IMR-90 (cell line): ENCODE measurements at regions of chr1 and their contacts with region 1.

Region 1: DNA sequence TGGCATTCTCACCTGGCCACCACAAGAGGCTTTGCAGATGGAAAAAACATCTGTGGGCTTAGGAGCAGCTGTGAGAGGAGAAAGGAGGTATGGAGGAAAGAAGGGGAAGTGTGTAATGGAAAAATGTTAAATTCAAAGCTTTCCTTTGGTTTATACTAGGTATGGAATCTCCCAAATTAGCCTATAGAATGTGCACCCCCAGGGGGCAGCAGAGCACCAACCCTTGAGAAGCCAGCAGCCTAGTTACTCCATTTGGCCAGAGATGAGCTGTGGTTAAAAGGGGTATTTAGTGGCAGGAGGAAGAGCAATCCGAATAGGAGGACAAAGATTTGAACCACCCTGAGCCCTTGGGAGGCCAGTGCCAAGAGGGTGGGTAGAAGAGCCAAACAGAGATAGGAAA is 97.5 kb upstream of the CTTNBP2NL start:
- DNase-seq: peak; percentile 42
- ATAC-seq: peak; percentile 52; the same call in 1 of the 2 replicates
- H3K4me3 ChIP-seq: no peak overlapping the region
- H3K27ac ChIP-seq: no peak overlapping the region
- H3K4me1 ChIP-seq: no peaks in the 10 kb centered on the region
- H3K27me3 ChIP-seq: peaks cover 5% of the 10 kb centered on the region; the same call in 1 of the 2 replicates
- CTCF ChIP-seq: peak; percentile 61
- POLR2A ChIP-seq: no peak
- RAD21 ChIP-seq: peak; percentile 52

Region 2: GRCh38 chr1:111197598-111198284 is 1100.8 kb before region 1 on chr1:
- CTCF ChIA-PET with region 1: no interaction called
- POLR2A ChIA-PET with region 1: no interaction called
- dilution Hi-C with region 1: no loop called
- in situ Hi-C with region 1: no loop called
- intact Hi-C with region 1: no loop called
- DNase-seq: peak; percentile 4
- ATAC-seq: peak; percentile 4; the same call in 1 of the 2 replicates
- H3K4me3 ChIP-seq: no peak overlapping the region
- H3K27ac ChIP-seq: no peak overlapping the region
- H3K4me1 ChIP-seq: peaks cover 22% of the 10 kb centered on the region
- H3K27me3 ChIP-seq: peaks cover 7% of the 10 kb centered on the region
- CTCF ChIP-seq: peak; percentile 30
- POLR2A ChIP-seq: no peak
- RAD21 ChIP-seq: no peak

Region 3: DNA sequence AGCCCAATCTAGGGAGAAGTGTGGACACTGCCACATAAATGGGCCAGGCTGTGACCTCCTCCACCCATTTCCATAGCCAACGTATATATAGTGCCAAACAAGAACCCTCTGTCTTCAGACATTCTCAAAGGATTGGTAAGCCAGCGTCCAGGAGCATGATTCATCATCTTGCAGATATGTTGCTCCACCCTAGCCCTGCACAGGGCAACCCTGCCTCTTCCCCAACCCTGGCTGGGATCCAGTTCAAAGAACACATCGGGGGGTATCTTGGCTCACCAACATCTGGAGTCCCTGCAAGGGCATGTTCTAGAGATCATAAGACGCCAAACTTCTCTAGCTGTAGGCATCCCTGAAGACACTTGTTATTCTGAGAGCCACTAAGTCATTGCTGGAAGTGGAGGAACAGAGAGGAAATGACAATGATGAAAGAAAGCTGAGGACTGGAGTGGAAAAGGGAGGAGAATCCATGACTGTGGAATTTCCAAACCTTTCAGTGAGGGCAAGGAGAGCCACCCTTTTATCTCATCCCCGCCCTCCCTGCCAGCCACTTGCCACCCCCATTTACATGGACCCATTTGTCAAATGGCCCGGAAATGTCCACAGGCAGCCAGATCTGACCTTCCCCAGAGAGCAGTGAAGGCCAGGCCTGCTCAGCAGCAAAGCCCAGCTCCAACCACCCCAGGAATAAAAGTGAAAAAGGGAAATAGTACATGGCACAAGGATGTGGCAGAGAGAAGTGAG is 46.6 kb before region 1 on chr1:
- CTCF ChIA-PET with region 1: no interaction called
- POLR2A ChIA-PET with region 1: no interaction called
- dilution Hi-C with region 1: no loop called
- in situ Hi-C with region 1: no loop called
- intact Hi-C with region 1: no loop called
- DNase-seq: peak; percentile 32
- ATAC-seq: peak; percentile 68
- H3K4me3 ChIP-seq: no peak overlapping the region
- H3K27ac ChIP-seq: no peak overlapping the region
- H3K4me1 ChIP-seq: no peaks in the 10 kb centered on the region
- H3K27me3 ChIP-seq: no peaks in the 10 kb centered on the region; the same call in none of the 2 replicates
- CTCF ChIP-seq: no peak
- POLR2A ChIP-seq: no peak
- RAD21 ChIP-seq: no peak

Region 4: GRCh38 chr1:112337028-112337531 is 38.5 kb after region 1 on chr1:
- CTCF ChIA-PET with region 1: interaction called, 3 read pairs
- POLR2A ChIA-PET with region 1: no interaction called
- dilution Hi-C with region 1: no loop called
- in situ Hi-C with region 1: no loop called
- intact Hi-C with region 1: loop called (anchors 2 kb)
- DNase-seq: peak; percentile 31
- ATAC-seq: peak; percentile 87
- H3K4me3 ChIP-seq: no peak overlapping the region
- H3K27ac ChIP-seq: no peak overlapping the region
- H3K4me1 ChIP-seq: no peaks in the 10 kb centered on the region
- H3K27me3 ChIP-seq: peaks cover 32% of the 10 kb centered on the region
- CTCF ChIP-seq: peak; percentile 52
- POLR2A ChIP-seq: no peak
- RAD21 ChIP-seq: peak; percentile 61

Region 5: DNA sequence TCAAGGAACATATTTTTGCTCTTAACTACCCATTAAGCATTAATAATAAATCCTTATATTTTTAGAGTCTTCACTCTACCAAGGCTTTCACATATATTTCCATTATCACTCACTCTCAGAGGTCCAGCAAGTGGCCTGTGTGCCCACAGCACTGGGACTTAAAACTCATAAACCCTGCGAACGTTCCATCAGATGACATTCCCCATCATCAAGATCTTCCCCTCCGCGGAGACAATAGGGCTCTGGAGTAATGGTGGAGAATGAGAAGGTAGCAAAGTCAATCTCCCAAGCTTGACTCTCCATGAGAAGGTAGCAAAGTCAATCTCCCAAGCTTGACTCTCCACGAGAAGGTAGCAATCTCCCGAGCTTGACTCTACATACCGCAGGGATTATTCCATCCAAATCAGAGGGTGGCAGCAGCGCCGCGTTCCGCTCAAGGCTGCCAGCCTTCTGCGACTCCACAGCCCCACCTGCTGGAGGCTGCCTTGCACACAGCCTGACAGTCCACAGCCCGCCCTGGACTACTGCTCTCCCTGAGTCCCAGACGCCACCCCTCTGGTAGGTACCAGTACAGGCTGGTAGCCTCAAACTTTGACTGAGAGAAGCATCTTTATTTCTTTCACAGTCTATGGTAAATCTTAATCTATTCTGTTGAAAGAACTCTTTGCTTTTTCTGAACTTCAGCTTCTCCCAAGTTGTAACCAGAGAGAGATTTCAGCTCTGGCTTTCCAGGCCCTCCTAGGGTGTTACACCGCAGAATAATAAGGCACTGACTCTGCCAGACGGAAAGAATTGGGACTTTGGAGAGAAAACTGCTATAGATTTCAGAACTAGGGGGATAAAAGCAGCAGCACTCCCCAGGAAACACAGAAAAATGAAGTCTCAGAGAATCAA is 71.1 kb after region 1 on chr1:
- CTCF ChIA-PET with region 1: interaction called, 4 read pairs
- POLR2A ChIA-PET with region 1: no interaction called
- dilution Hi-C with region 1: no loop called
- in situ Hi-C with region 1: no loop called
- intact Hi-C with region 1: loop called (anchors 2 kb)
- DNase-seq: peak; percentile 75
- ATAC-seq: peak; percentile 100
- H3K4me3 ChIP-seq: no peak overlapping the region
- H3K27ac ChIP-seq: no peak overlapping the region
- H3K4me1 ChIP-seq: no peaks in the 10 kb centered on the region
- H3K27me3 ChIP-seq: peaks cover 34% of the 10 kb centered on the region
- CTCF ChIP-seq: peak; percentile 99
- POLR2A ChIP-seq: no peak
- RAD21 ChIP-seq: peak; percentile 85

Region 6: GRCh38 chr1:112508278-112509004 is 209.9 kb after region 1 on chr1 and contains the start of gene WNT2B:
- CTCF ChIA-PET with region 1: no interaction called
- POLR2A ChIA-PET with region 1: no interaction called
- dilution Hi-C with region 1: no loop called
- in situ Hi-C with region 1: no loop called
- intact Hi-C with region 1: no loop called
- DNase-seq: no peak
- ATAC-seq: peak; percentile 39
- H3K4me3 ChIP-seq: peak within 1 kb of the TSS; percentile 24
- H3K27ac ChIP-seq: no peak within 1 kb of the TSS
- H3K4me1 ChIP-seq: peaks cover 9% of the 10 kb centered on the region; the same call in 1 of the 2 replicates
- H3K27me3 ChIP-seq: peaks cover 49% of the 10 kb centered on the region
- CTCF ChIP-seq: no peak
- POLR2A ChIP-seq: no peak
- RAD21 ChIP-seq: no peak
- total RNA-seq, gene WNT2B: 0.54 and 0.56 TPM in 2 replicates